Right ventricle myocardium superior (tissue), 1 donor: ENCODE measurements at regions of chr5 and their contacts with region 1.

Region 1: DNA sequence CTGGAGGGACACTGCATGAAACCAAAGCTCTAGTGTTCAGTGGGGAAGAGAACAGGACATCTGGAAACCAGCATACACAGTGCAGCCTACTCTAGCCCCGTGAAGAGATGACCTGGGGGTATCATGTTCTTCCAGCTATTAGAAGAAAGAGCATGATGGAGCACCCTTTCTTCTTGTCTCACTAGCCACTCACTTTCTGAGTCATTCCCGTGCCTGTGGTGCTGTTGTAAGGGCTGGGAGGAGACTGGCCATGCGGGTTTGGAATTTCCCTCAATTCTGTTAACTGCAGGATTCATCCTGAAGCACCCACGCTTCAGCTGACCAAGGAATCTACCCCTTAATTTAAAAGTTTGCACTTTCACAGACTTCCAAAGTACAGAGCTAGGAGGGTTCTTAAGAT is 137.0 kb downstream of the COL23A1 start:
- DNase-seq: no peak
- ATAC-seq: no peak

Region 2: DNA sequence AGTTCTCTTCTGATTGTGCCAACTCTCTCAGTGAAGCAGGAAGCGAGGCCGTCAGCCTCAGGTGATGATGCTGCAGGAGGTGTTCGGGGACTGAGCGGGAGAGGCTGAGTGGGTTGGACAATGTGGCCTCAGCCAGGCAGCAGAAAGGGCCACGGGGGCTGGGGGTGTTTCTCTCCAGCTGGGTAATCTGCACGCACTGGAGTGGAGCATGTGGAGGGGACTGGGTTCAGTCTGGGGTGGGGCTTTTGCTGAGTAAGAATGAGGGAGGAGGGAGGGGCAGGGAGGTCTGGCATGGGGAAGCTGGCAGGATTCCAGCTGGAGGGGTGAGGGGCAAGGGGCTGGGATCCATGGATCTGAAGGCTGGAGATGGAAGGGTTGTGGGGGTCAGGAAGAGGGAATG is 159.8 kb before region 1 on chr5:
- intact Hi-C with region 1: loop called (anchors 10 kb)
- DNase-seq: peak; percentile 13
- ATAC-seq: no peak

Region 3: GRCh38 chr5:178350361-178351220 is 102.6 kb before region 1 on chr5:
- intact Hi-C with region 1: no loop called
- DNase-seq: no peak
- ATAC-seq: no peak